Activated T-helper 2 cell treated with anti-CD3 and anti-CD28 coated beads, Interferon-gamma antibody, Interleukin-2, Interleukin-4, amounts not matched to agents 10 μg/mL and 5 μg/mL and 100 μg/mL, durations not matched to agents 14 hours and 24 hours and 36 hours (primary cell): ENCODE measurements at regions of chr1 and their contacts with region 1.

Region 1: GRCh38 chr1:55215256-55216021 is at the start of gene USP24:
- DNase-seq: peak; percentile 81
- H3K4me3 Mint-ChIP-seq: peak within 1 kb of the TSS; percentile 92
- H3K27ac Mint-ChIP-seq: peak within 1 kb of the TSS; percentile 94
- H3K4me1 Mint-ChIP-seq: peaks cover 55% of the 10 kb centered on the region
- H3K27me3 Mint-ChIP-seq: no peaks in the 10 kb centered on the region
- total RNA-seq, gene USP24: 42.6 and 44.0 TPM in 2 replicates

Region 2: DNA sequence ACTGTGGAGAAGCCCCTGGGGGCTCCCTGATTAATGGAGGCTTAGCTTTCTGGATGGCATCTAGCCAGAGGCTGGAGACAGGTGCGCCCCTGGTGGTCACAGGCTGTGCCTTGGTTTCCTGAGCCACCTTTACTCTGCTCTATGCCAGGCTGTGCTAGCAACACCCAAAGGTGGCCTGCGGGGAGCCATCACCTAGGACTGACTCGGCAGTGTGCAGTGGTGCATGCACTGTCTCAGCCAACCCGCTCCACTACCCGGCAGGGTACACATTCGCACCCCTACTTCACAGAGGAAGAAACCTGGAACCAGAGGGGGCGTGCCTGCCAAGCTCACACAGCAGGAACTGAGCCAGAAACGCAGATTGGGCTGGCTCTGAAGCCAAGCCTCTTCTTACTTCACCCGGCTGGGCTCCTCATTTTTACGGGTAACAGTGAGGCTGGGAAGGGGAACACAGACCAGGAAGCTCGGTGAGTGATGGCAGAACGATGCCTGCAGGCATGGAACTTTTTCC is 151.3 kb before region 1 on chr1:
- intact Hi-C with region 1: no loop called
- DNase-seq: no peak
- H3K4me3 Mint-ChIP-seq: no peak overlapping the region
- H3K27ac Mint-ChIP-seq: no peak overlapping the region
- H3K4me1 Mint-ChIP-seq: peaks cover 14% of the 10 kb centered on the region
- H3K27me3 Mint-ChIP-seq: no peaks in the 10 kb centered on the region

Region 3: DNA sequence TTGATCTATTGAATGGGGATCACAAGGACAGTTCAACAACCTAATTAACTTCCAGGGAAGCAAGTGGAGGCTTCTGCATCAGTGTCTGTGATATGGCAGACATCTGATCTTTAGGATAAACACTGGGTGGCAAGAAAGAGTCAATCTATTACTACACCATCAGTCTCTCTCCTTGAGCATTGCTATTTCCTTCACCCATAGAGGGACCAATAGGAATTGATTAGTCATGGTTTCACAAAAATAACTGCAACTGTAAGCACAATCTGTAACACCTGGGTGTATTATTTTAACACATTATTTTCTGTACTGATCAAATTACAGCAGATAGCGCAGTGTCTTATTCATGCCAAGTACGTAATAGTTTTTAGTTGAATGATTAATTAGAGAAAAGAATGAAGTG is 50.5 kb before region 1 on chr1:
- intact Hi-C with region 1: loop called (anchors 5 kb)
- DNase-seq: no peak
- H3K4me3 Mint-ChIP-seq: no peak overlapping the region
- H3K27ac Mint-ChIP-seq: peak overlapping the region; percentile 40
- H3K4me1 Mint-ChIP-seq: peaks cover 26% of the 10 kb centered on the region
- H3K27me3 Mint-ChIP-seq: no peaks in the 10 kb centered on the region

Region 4: DNA sequence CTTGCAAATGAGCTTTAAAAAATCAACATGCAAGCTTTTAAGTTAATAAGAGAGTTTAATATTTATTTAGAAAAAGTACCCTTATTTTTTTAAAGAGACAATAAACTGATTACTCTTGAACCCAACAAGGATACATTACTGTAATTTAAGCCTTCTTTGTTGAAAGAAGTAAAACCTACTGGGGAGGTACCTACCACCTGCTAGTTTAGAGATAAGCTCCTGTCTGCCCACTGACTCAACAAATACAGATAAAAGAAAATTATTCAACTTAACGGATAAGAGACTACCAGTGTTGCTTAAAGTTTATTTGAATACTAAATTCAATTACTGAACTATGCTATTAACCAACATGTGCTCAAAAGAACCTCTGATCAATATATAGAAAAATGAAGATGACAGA is 23.3 kb before region 1 on chr1:
- intact Hi-C with region 1: no loop called
- DNase-seq: no peak
- H3K4me3 Mint-ChIP-seq: no peak overlapping the region
- H3K27ac Mint-ChIP-seq: no peak overlapping the region
- H3K4me1 Mint-ChIP-seq: peaks cover 39% of the 10 kb centered on the region
- H3K27me3 Mint-ChIP-seq: no peaks in the 10 kb centered on the region

Region 5: DNA sequence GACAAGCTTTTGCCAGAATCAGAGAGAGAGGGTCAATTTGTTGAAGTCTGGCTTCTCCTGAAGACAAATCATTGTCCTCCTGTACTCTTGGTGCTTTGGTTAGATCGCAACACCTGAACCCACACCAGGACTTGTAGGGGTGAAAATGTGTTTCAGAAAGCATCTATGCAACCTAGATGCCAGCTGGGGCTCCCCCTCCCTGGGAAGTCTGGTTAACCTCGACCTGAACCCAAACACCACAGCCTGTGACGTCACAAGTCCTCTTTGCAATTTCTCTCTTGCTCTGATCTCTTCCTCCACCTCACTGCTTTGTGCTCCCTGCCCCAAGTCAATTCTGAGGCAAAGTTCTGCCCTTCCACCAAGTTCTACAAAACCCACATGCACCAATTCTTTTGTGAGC is 42.5 kb after region 1 on chr1:
- intact Hi-C with region 1: loop called (anchors 5 kb)
- DNase-seq: peak; percentile 53
- H3K4me3 Mint-ChIP-seq: no peak overlapping the region
- H3K27ac Mint-ChIP-seq: no peak overlapping the region
- H3K4me1 Mint-ChIP-seq: peaks cover 12% of the 10 kb centered on the region
- H3K27me3 Mint-ChIP-seq: peaks cover 14% of the 10 kb centered on the region

Region 6: DNA sequence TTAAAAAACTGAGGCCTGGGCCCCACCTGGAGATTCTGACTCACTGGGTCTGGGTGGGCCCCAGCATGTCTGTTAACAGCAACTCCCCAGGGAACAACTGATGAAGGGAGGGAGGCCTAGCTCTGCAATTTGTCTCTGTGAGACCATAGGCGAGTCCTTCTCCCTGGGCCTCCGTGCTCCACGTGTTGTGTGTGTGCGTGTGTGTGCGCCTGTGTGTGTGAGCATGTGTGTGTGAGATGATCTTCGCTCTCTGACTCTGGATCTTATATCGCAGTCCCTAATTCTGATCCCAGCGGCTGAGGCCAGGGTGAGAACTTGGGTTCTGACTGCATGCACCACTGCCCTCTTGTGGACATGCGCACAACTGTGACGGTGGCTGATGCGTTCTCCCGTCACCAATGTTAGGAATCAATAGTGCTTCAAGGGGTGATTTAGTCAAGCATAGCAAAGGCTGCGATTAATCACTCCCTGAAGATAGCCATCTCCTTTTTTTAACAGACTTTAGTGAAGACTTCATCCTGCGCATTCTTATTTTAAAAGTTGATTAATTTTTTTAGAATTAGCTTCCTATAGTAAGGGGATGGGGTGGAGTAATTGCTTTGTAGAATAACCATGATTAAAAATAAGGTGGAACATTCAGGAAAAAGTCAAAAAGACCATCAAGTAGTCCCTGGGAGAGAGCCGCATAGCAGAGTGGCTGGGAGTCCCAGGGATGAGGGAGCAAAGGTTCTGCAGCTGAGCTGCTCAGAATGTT is 62.1 kb after region 1 on chr1:
- intact Hi-C with region 1: loop called (anchors 2 kb)
- DNase-seq: peak; percentile 68
- H3K4me3 Mint-ChIP-seq: no peak overlapping the region
- H3K27ac Mint-ChIP-seq: peak overlapping the region; percentile 56
- H3K4me1 Mint-ChIP-seq: peaks cover 33% of the 10 kb centered on the region
- H3K27me3 Mint-ChIP-seq: peaks cover 10% of the 10 kb centered on the region